ENCODE measurements at regions of chrX and their contacts with region 1.

Region 1: GRCh38 chrX:18425199-18426003 is at the start of gene CDKL5:
- DNase-seq: peak; percentile 83 to 98 (median 96)
- ATAC-seq: peak; percentile 97
- H3K4me3 ChIP-seq: peak within 1 kb of the TSS; percentile 77
- H3K4me3 Mint-ChIP-seq: peak within 1 kb of the TSS; percentile 85 to 95 (median 89)
- H3K27ac ChIP-seq: peak within 1 kb of the TSS; percentile 93
- H3K27ac Mint-ChIP-seq: peak within 1 kb of the TSS; percentile 71 to 92 (median 91)
- H3K4me1 ChIP-seq: peaks cover 0 to 5% of the 10 kb centered on the region in 2 donors
- H3K4me1 Mint-ChIP-seq: peaks cover 5 to 25% (median 13%) of the 10 kb centered on the region in 7 donors
- H3K27me3 ChIP-seq: no peaks in the 10 kb centered on the region
- H3K27me3 Mint-ChIP-seq: peaks cover 0 to 25% (median 0%) of the 10 kb centered on the region in 5 donors
- total RNA-seq, gene CDKL5: 1.2 to 7.0 (median 5.8) TPM

Region 2: GRCh38 chrX:16870095-16870860 is 1555.1 kb before region 1 on chrX and contains the start of gene RBBP7:
- CTCF ChIA-PET with region 1: no interaction called
- POLR2A ChIA-PET with region 1: no interaction called
- intact Hi-C with region 1: loop called in 1 of 2 experiments (anchors 10 kb)
- DNase-seq: peak; percentile 88 to 98 (median 94)
- ATAC-seq: peak; percentile 91
- H3K4me3 ChIP-seq: peak within 1 kb of the TSS; percentile 69
- H3K4me3 Mint-ChIP-seq: peak within 1 kb of the TSS; percentile 93 to 99 (median 96)
- H3K27ac ChIP-seq: peak within 1 kb of the TSS; percentile 96
- H3K27ac Mint-ChIP-seq: peak within 1 kb of the TSS; percentile 89 to 98 (median 97)
- H3K4me1 ChIP-seq: peaks cover 0 to 23% of the 10 kb centered on the region in 2 donors
- H3K4me1 Mint-ChIP-seq: peaks cover 7 to 50% (median 39%) of the 10 kb centered on the region in 7 donors
- H3K27me3 ChIP-seq: no peaks in the 10 kb centered on the region
- H3K27me3 Mint-ChIP-seq: peaks cover 0 to 9% (median 0%) of the 10 kb centered on the region in 5 donors
- total RNA-seq, gene RBBP7: 82.9 to 112 (median 94.6) TPM

Region 3: GRCh38 chrX:18354369-18355223 is 70.8 kb before region 1 on chrX and contains the start of gene SCML2:
- CTCF ChIA-PET with region 1: no interaction called
- POLR2A ChIA-PET with region 1: interaction called, 3 read pairs
- intact Hi-C with region 1: loop called (anchors 1 kb)
- DNase-seq: peak; percentile 3 to 48 (median 23)
- ATAC-seq: peak; percentile 78
- H3K4me3 ChIP-seq: peak within 1 kb of the TSS; percentile 35
- H3K4me3 Mint-ChIP-seq: peak within 1 kb of the TSS; percentile 71 to 88 (median 82)
- H3K27ac ChIP-seq: no peak within 1 kb of the TSS
- H3K27ac Mint-ChIP-seq: peak within 1 kb of the TSS in 2 of 9 donors; percentile 52 to 59
- H3K4me1 ChIP-seq: peaks cover 0 to 4% of the 10 kb centered on the region in 2 donors
- H3K4me1 Mint-ChIP-seq: peaks cover 0 to 10% (median 5%) of the 10 kb centered on the region in 7 donors
- H3K27me3 ChIP-seq: peaks cover 0 to 5% of the 10 kb centered on the region in 2 donors
- H3K27me3 Mint-ChIP-seq: peaks cover 0 to 48% (median 2%) of the 10 kb centered on the region in 5 donors
- total RNA-seq, gene SCML2: 0.96 to 2.2 (median 1.4) TPM

Region 4: GRCh38 chrX:18886344-18887161 is 461.2 kb after region 1 on chrX:
- CTCF ChIA-PET with region 1: no interaction called
- POLR2A ChIA-PET with region 1: interaction called, 5 read pairs
- intact Hi-C with region 1: loop called (anchors 1 kb)
- DNase-seq: peak; percentile 10 to 47 (median 40)
- ATAC-seq: peak; percentile 79
- H3K4me3 ChIP-seq: peak overlapping the region; percentile 56
- H3K4me3 Mint-ChIP-seq: peak overlapping the region; percentile 84 to 97 (median 90)
- H3K27ac ChIP-seq: peak overlapping the region; percentile 57
- H3K27ac Mint-ChIP-seq: peak overlapping the region; percentile 71 to 95 (median 90)
- H3K4me1 ChIP-seq: peaks cover 6 to 23% of the 10 kb centered on the region in 2 donors
- H3K4me1 Mint-ChIP-seq: peaks cover 11 to 47% (median 37%) of the 10 kb centered on the region in 7 donors
- H3K27me3 ChIP-seq: no peaks in the 10 kb centered on the region
- H3K27me3 Mint-ChIP-seq: no peaks in the 10 kb centered on the region

Region 5: GRCh38 chrX:19343535-19344408 is 918.4 kb after region 1 on chrX and contains the start of gene PDHA1:
- CTCF ChIA-PET with region 1: no interaction called
- POLR2A ChIA-PET with region 1: no interaction called
- intact Hi-C with region 1: loop called (anchors 1 kb)
- DNase-seq: peak; percentile 73 to 94 (median 91)
- ATAC-seq: peak; percentile 99
- H3K4me3 ChIP-seq: peak within 1 kb of the TSS; percentile 71
- H3K4me3 Mint-ChIP-seq: peak within 1 kb of the TSS; percentile 79 to 90 (median 87)
- H3K27ac ChIP-seq: peak within 1 kb of the TSS; percentile 86
- H3K27ac Mint-ChIP-seq: peak within 1 kb of the TSS; percentile 82 to 95 (median 89)
- H3K4me1 ChIP-seq: peaks cover 6 to 9% of the 10 kb centered on the region in 2 donors
- H3K4me1 Mint-ChIP-seq: peaks cover 0 to 28% (median 14%) of the 10 kb centered on the region in 7 donors
- H3K27me3 ChIP-seq: no peaks in the 10 kb centered on the region
- H3K27me3 Mint-ChIP-seq: no peaks in the 10 kb centered on the region
- total RNA-seq, gene PDHA1: 113 to 123 (median 119) TPM

Region 6: GRCh38 chrX:20141281-20142220 is 1716.2 kb after region 1 on chrX and contains the start of gene EIF1AX:
- CTCF ChIA-PET with region 1: no interaction called
- POLR2A ChIA-PET with region 1: no interaction called
- intact Hi-C with region 1: loop called in 1 of 2 experiments (anchors 1 kb)
- DNase-seq: peak; percentile 82 to 100 (median 98)
- ATAC-seq: peak; percentile 99
- H3K4me3 ChIP-seq: peak within 1 kb of the TSS; percentile 84
- H3K4me3 Mint-ChIP-seq: peak within 1 kb of the TSS; percentile 80 to 96 (median 88)
- H3K27ac ChIP-seq: peak within 1 kb of the TSS; percentile 93
- H3K27ac Mint-ChIP-seq: peak within 1 kb of the TSS; percentile 68 to 97 (median 89)
- H3K4me1 ChIP-seq: peaks cover 8 to 13% of the 10 kb centered on the region in 2 donors
- H3K4me1 Mint-ChIP-seq: peaks cover 4 to 42% (median 27%) of the 10 kb centered on the region in 7 donors
- H3K27me3 ChIP-seq: no peaks in the 10 kb centered on the region
- H3K27me3 Mint-ChIP-seq: no peaks in the 10 kb centered on the region
- total RNA-seq, gene EIF1AX: 40.2 to 67.5 (median 51.6) TPM